Endothelial cell of umbilical vein (primary cell): ENCODE measurements at regions of chr10 and their contacts with region 1.

Region 1: GRCh38 chr10:6151087-6151977 is 51.4 kb upstream of the PFKFB3 start:
- DNase-seq: peak; percentile 83
- H3K4me3 ChIP-seq: peak overlapping the region in 1 of 3 experiments; percentile 16
- H3K27ac ChIP-seq: peak overlapping the region; percentile 25
- H3K4me1 ChIP-seq: peaks cover 9% of the 10 kb centered on the region
- H3K27me3 ChIP-seq: no peaks in the 10 kb centered on the region
- CTCF ChIP-seq: peak; percentile 72 to 78
- POLR2A ChIP-seq: no peak

Region 2: DNA sequence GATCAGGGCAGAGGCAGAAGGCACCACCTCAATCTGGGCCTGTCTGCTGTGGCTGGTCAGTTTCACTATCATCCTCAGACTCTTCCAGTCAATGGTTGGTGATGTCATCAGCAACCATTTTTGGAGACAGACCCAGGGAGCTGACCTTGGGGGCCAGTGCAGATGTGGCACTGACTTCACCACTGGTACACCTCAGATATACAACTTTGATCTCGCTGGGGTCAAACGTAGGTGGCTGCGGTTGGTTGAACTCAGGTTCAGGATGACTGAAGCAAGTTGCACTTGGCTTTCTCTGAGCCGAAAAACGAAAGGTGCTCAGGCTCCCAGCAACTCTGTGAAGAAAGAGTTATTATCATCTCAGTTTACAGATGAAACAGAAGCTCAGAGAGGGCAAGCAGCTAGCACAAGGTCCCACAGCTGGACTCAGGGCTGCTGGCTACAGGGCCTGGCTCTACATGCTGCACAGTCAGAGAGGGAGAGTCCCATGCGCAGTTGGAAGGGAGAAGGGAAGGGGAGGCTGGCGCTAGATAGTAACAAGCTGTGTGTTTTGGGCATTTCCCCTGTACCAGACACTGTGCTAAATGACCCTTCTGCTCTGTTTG is 288.9 kb before region 1 on chr10:
- CTCF ChIA-PET with region 1: no interaction called
- POLR2A ChIA-PET with region 1: no interaction called
- dilution Hi-C with region 1: no loop called
- intact Hi-C with region 1: no loop called
- DNase-seq: no peak
- H3K4me3 ChIP-seq: no peak overlapping the region
- H3K27ac ChIP-seq: no peak overlapping the region
- H3K4me1 ChIP-seq: peaks cover 8% of the 10 kb centered on the region
- H3K27me3 ChIP-seq: no peaks in the 10 kb centered on the region
- CTCF ChIP-seq: no peak
- POLR2A ChIP-seq: no peak

Region 3: GRCh38 chr10:5895804-5896203 is 255.5 kb before region 1 on chr10:
- CTCF ChIA-PET with region 1: no interaction called
- POLR2A ChIA-PET with region 1: no interaction called
- dilution Hi-C with region 1: no loop called
- intact Hi-C with region 1: no loop called
- DNase-seq: no peak
- H3K4me3 ChIP-seq: no peak overlapping the region
- H3K27ac ChIP-seq: no peak overlapping the region
- H3K4me1 ChIP-seq: peaks cover 29% of the 10 kb centered on the region
- H3K27me3 ChIP-seq: no peaks in the 10 kb centered on the region
- CTCF ChIP-seq: no peak
- POLR2A ChIP-seq: no peak

Region 4: GRCh38 chr10:5971315-5971832 is 180.0 kb before region 1 on chr10:
- CTCF ChIA-PET with region 1: no interaction called
- POLR2A ChIA-PET with region 1: no interaction called
- dilution Hi-C with region 1: no loop called
- intact Hi-C with region 1: loop called (anchors 2 kb)
- DNase-seq: peak; percentile 88
- H3K4me3 ChIP-seq: peak overlapping the region in 1 of 3 experiments; percentile 28
- H3K27ac ChIP-seq: peak overlapping the region; percentile 88
- H3K4me1 ChIP-seq: peaks cover 40% of the 10 kb centered on the region
- H3K27me3 ChIP-seq: no peaks in the 10 kb centered on the region
- CTCF ChIP-seq: no peak
- POLR2A ChIP-seq: no peak

Region 5: GRCh38 chr10:6108603-6109443 is 42.5 kb before region 1 on chr10:
- CTCF ChIA-PET with region 1: interaction called, 6 read pairs
- POLR2A ChIA-PET with region 1: no interaction called
- dilution Hi-C with region 1: no loop called
- intact Hi-C with region 1: loop called (anchors 1 kb)
- DNase-seq: peak; percentile 61
- H3K4me3 ChIP-seq: no peak overlapping the region
- H3K27ac ChIP-seq: no peak overlapping the region
- H3K4me1 ChIP-seq: peaks cover under 1% of the 10 kb centered on the region
- H3K27me3 ChIP-seq: no peaks in the 10 kb centered on the region
- CTCF ChIP-seq: peak; percentile 45 to 53
- POLR2A ChIP-seq: no peak

Region 6: GRCh38 chr10:6114805-6115341 is 36.5 kb before region 1 on chr10:
- CTCF ChIA-PET with region 1: interaction called, 3 read pairs
- POLR2A ChIA-PET with region 1: no interaction called
- dilution Hi-C with region 1: no loop called
- intact Hi-C with region 1: loop called (anchors 1 kb)
- DNase-seq: peak; percentile 60
- H3K4me3 ChIP-seq: no peak overlapping the region
- H3K27ac ChIP-seq: peak overlapping the region; percentile 74
- H3K4me1 ChIP-seq: peaks cover 13% of the 10 kb centered on the region
- H3K27me3 ChIP-seq: no peaks in the 10 kb centered on the region
- CTCF ChIP-seq: no peak
- POLR2A ChIP-seq: no peak